ENCODE measurements at regions of chr18 and their contacts with region 1.

Region 1: GRCh38 chr18:5057386-5058348 is 139.4 kb downstream of the AKAIN1 start:
- DNase-seq: peak; percentile 68
- H3K4me3 ChIP-seq: no peak overlapping the region
- H3K27ac ChIP-seq: no peak overlapping the region
- H3K4me1 ChIP-seq: no peaks in the 10 kb centered on the region
- H3K27me3 ChIP-seq: 0 out of 2 replicates have a peak, but pooled peaks cover 7% of the 10 kb centered on the region

Region 2: DNA sequence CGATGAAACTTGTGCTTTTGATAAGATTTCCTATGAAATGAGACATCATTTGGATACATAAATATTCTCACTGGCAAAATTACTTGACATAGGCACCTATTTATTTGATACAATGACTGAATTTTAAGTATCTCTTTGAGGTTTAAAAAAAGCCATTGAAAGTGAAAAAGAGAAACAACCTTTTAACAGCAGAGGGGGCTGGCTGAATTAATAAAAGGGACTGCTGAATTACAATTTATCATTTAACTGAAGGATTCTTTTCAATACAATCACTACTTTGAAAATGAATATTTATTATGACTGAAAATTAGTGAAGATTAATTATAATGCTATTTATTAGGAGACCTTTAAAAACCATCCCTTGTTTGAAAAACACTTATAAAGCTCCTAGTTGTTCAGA is 937.9 kb before region 1 on chr18:
- in situ Hi-C with region 1: loop called (anchors 10 kb)
- DNase-seq: no peak
- H3K4me3 ChIP-seq: no peak overlapping the region
- H3K27ac ChIP-seq: no peak overlapping the region
- H3K4me1 ChIP-seq: no peaks in the 10 kb centered on the region
- H3K27me3 ChIP-seq: no peaks in the 10 kb centered on the region

Region 3: DNA sequence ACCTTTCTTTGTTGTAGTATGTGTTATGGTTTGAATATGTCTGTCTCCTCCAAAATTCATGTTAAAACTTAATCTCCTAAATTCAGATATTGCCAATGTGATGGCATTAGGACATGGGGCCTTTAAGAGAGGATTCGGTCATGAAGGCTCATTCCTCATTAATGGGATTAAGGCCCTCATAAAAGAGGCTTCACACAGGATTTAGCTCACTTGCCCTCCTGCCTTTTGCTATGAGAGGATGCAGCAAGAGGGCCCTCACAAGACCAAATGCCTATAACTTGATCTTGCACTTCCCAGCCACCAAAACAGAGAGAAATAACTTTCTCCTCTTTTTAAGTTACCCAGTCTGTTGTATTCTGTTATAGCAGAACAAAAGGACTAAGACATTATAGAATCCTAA is 218.2 kb after region 1 on chr18:
- in situ Hi-C with region 1: no loop called
- DNase-seq: no peak
- H3K4me3 ChIP-seq: no peak overlapping the region
- H3K27ac ChIP-seq: no peak overlapping the region
- H3K4me1 ChIP-seq: no peaks in the 10 kb centered on the region
- H3K27me3 ChIP-seq: no peaks in the 10 kb centered on the region

Measured in GM23248 (cell line).